Mucosa of descending colon (tissue), 3 donors: ENCODE measurements at regions of chr15 and their contacts with region 1.

Region 1: DNA sequence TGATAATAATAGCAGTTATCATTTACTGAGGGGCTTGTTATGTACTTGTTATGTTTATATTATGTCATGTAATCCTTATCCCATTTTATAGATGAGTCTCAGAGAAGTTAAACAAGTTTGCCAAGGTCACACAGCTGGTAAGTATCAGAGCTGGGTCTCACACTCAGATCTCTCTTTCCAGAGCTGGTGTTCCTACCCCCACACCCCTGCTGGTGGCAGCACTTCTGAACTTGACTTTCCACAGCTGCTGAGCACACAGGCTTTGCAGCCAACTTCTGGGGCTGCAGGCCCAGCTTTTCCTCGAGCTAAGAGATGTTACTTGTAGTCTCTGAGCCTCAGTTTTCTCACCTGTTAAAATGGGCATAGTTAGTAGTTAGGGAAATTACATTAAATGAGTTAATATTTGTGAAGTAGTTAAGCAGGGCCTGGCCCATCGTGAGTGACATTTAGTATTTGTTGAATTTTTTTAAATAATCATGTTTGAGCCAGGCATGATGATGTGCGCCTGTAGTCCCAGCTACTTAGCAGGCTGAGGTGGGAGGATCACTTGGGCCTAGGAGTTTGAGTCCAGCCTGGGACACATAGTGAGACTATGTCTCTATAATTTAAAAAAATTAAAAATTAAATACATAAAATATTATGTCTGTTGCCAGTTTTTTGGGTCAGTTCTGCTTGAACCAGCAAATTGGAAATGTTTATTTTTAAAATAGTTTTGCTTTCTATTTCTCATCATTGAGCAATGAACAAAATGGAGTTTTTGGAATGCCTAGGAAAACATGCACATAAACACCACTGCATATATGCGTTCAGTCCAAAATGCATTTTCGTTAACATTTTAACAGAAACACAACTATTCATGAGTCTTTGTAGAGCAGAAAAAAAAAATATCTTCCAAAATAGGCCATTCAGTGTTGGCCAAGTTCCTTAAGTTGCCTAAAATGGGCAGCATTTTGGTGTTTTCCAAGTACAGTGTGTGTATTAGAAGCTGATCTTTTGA is 87.3 kb downstream of the SMAD6 start:
- DNase-seq: peak in 2 of 3 donors; percentile 50 to 55
- ATAC-seq: peak; percentile 74
- H3K4me3 ChIP-seq: no peak overlapping the region
- H3K4me1 ChIP-seq: no peaks in the 10 kb centered on the region
- CTCF ChIP-seq: no peak

Region 2: DNA sequence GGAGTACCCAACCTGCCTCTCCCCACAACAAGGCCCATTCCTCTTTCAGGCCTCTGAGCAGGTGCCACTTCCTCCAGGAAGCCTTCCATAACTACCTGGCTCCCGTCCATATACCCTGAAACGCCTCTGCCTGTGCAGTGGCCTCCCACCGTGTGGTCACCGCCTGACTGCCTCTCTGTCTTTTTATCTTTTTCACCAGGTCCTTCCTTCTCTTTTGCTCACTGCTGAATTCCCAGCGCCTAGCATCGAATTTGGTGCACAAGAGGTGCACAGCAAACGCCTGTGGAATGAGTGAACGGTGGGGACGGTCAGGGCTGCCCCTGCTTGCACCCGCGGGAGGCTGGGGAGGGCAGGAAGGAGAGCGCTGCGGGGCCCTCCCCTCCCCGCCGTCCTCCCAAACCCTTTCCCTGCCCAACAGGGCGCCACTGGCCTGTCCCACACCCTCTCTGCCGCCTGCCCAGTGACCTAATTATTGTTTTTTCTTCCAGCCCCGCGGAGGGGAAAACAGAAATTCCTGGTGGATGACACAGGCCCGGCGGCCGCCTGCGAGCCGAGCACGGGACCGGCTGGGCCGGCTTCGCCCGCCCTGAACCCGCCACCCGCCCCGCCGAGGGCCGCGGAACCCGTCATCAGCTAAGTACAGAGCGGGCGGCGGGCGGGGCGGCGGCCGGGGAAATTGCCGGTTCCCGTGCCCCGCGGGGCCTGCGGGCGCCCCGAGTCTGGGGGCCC is 52.8 kb after region 1 on chr15:
- intact Hi-C with region 1: loop called (anchors 10 kb)
- DNase-seq: peak; percentile 77 to 85 (median 81)
- ATAC-seq: peak; percentile 87
- H3K4me3 ChIP-seq: peak overlapping the region; percentile 11
- H3K4me1 ChIP-seq: peaks cover 7% of the 10 kb centered on the region
- CTCF ChIP-seq: no peak